HCT116 (cell line): ENCODE measurements at regions of chr1 and their contacts with region 1.

Region 1: DNA sequence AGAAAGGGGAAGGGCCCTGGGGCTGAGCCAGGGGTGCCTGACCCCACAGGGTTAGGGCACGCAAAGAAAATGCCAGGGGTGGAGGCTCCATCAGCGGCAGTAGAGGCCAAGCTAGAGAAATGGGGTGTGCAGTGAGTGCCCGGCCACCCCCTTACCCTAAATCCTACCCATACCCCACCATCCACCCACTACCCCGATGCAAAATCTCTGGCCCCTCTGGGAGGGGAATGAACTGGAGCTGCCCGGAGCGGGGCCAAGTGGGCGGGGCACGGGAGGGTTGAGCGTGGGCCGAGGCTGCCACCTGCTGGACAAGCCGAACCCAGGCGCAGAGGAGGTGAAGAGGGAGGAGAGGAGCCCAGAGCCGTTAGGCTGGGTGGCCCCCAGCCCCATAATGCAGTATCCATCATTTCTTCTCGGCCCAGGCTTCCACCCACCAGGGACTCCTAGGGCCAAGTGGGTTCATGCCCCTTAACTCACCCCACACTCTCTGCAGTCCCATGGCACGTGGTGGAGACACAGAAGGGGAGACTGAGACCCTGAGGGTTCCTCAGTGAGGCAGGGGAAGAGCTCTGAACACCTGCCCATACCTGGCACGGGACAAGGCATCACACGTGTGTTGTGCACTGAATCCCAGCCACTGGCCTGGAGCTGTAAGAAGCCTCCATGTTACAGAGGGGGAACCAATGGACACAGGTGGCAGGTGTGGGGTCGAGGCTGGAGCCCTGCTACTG is 1.4 kb upstream of the C1QC start:
- DNase-seq: no peak
- ATAC-seq: peak; percentile 93
- H3K4me3 ChIP-seq: no peak overlapping the region
- H3K27ac ChIP-seq: no peak overlapping the region
- H3K4me1 ChIP-seq: no peaks in the 10 kb centered on the region
- H3K27me3 ChIP-seq: no peaks in the 10 kb centered on the region
- CTCF ChIP-seq: peak; percentile 87 to 91 (median 89)
- POLR2A ChIP-seq: no peak
- RAD21 ChIP-seq: peak; percentile 97

Region 2: GRCh38 chr1:22131875-22132486 is 510.1 kb before region 1 on chr1:
- CTCF ChIA-PET with region 1: no interaction called
- POLR2A ChIA-PET with region 1: no interaction called
- RAD21 ChIA-PET with region 1: no interaction called
- intact Hi-C with region 1: loop called (anchors 5 kb)
- DNase-seq: peak; percentile 23
- ATAC-seq: peak; percentile 89
- H3K4me3 ChIP-seq: no peak overlapping the region
- H3K27ac ChIP-seq: no peak overlapping the region
- H3K4me1 ChIP-seq: peaks cover 5 to 13% of the 10 kb centered on the region in 2 experiments
- H3K27me3 ChIP-seq: no peaks in the 10 kb centered on the region
- CTCF ChIP-seq: peak; percentile 79 to 90 (median 86)
- POLR2A ChIP-seq: no peak
- RAD21 ChIP-seq: peak; percentile 97

Region 3: GRCh38 chr1:22527555-22528296 is 114.3 kb before region 1 on chr1:
- CTCF ChIA-PET with region 1: no interaction called
- POLR2A ChIA-PET with region 1: no interaction called
- RAD21 ChIA-PET with region 1: no interaction called
- intact Hi-C with region 1: loop called (anchors 2 kb)
- DNase-seq: no peak
- ATAC-seq: no peak
- H3K4me3 ChIP-seq: no peak overlapping the region
- H3K27ac ChIP-seq: no peak overlapping the region
- H3K4me1 ChIP-seq: no peaks in the 10 kb centered on the region
- H3K27me3 ChIP-seq: no peaks in the 10 kb centered on the region
- CTCF ChIP-seq: peak in 1 of 3 experiments; percentile 21; a peak in 2 of 6 replicates
- POLR2A ChIP-seq: no peak
- RAD21 ChIP-seq: peak; percentile 43

Region 4: GRCh38 chr1:22557341-22557950 is 84.6 kb before region 1 on chr1:
- CTCF ChIA-PET with region 1: no interaction called
- POLR2A ChIA-PET with region 1: no interaction called
- RAD21 ChIA-PET with region 1: no interaction called
- intact Hi-C with region 1: no loop called
- DNase-seq: no peak
- ATAC-seq: no peak
- H3K4me3 ChIP-seq: no peak overlapping the region
- H3K27ac ChIP-seq: no peak overlapping the region
- H3K4me1 ChIP-seq: no peaks in the 10 kb centered on the region
- H3K27me3 ChIP-seq: peaks cover 7% of the 10 kb centered on the region; the same call in 1 of the 2 replicates
- CTCF ChIP-seq: no peak
- POLR2A ChIP-seq: no peak
- RAD21 ChIP-seq: no peak